Breast epithelium (tissue), 4 donors: ENCODE measurements at regions of chr3 and their contacts with region 1.

Region 1: DNA sequence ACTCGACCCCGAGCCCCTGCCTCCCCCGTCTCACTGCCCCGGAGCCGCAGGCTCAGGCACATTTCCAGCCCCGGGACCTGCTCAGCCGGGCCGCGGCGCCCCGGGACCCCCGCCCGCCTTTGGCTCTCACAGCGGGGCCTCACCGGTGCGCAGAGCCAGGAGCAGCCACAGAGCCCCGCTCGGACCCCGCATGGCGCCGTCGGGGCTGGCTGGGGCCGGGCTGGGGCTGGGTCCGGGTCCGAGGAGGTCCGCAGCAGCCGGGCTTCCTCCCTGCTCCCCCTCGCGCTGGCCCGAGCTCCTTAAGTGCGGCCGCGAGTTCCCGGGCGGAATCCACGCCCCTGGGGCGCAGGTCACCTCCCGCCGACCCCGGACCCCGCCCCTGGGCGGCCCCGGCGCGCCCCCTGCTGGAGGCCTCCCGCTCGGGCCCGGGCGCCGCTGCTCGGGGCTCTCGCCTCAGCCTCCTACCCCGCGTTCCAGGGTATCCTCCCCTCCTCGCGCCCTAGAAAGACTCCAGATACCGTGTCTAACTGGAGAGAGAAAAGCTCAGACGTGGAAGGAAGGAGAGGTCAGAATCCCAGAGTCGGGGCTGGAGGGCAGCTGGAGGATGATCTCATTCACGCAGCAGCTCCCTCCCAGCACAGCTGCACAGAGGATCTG is at the start of gene MELTF:
- DNase-seq: no peak
- H3K4me3 ChIP-seq: peak within 1 kb of the TSS; percentile 56 to 77 (median 71)
- H3K27ac ChIP-seq: peak within 1 kb of the TSS; percentile 66 to 82
- H3K4me1 ChIP-seq: peaks cover 3 to 5% of the 10 kb centered on the region in 2 donors
- H3K27me3 ChIP-seq: no peaks in the 10 kb centered on the region
- CTCF ChIP-seq: peak; percentile 5 to 56 (median 11)
- POLR2A ChIP-seq: no peak
- total RNA-seq, gene MELTF: 7.2 to 58.2 (median 10.2) TPM

Region 2: DNA sequence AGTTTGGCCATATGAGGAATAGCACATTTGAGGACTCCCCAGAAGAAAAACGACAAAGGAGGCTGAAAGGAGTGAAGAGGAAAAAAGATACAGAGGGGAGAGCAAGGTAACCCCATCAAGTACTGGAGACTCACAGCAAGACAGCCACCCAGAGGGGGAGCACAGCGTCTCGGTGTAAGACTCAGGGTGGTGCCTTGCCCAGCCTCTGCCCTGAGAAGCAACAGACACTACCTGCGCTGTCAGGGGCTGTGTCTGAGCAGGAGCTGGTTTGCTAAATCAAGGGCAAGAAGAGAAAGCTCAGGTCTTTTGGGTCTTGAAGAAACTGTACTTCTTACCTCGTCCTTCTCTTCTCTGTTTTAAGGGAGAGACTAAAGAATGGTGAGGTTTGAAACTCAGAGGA is 433.3 kb before region 1 on chr3:
- intact Hi-C with region 1: no loop called
- DNase-seq: no peak
- H3K4me3 ChIP-seq: no peak overlapping the region
- H3K27ac ChIP-seq: no peak overlapping the region
- H3K4me1 ChIP-seq: no peaks in the 10 kb centered on the region
- H3K27me3 ChIP-seq: peaks cover 0 to 5% of the 10 kb centered on the region in 2 donors
- CTCF ChIP-seq: no peak
- POLR2A ChIP-seq: no peak

Region 3: GRCh38 chr3:196992491-196993065 is 37.1 kb before region 1 on chr3:
- intact Hi-C with region 1: loop called (anchors 1 kb)
- DNase-seq: no peak
- H3K4me3 ChIP-seq: no peak overlapping the region
- H3K27ac ChIP-seq: no peak overlapping the region
- H3K4me1 ChIP-seq: no peaks in the 10 kb centered on the region
- H3K27me3 ChIP-seq: no peaks in the 10 kb centered on the region
- CTCF ChIP-seq: no peak
- POLR2A ChIP-seq: no peak